Heart right ventricle (tissue), 16 donors: ENCODE measurements at regions of chr21 and their contacts with region 1.

Region 1: DNA sequence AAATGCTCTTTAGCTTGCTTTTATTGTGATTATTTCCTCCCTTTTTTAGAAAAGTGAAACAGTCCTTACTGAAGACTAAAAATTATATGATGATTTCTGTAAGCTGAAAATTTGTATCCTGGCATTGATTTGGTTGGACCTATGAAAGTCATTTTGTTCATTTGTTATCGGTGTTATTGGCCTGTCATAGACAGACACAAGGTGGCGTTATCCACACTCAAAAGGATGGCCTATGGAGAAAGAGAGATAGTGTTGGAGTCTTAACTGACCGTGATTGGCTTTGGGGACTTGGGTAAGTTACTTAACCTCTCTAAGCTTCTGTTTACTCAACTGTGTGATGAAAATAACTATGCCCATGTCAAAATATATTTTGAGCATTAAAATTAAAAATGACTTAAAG is 203.6 kb upstream of the CHODL start:
- DNase-seq: no peak
- ATAC-seq: peak in 2 of 8 donors; percentile 47 to 79
- H3K4me3 ChIP-seq: no peak overlapping the region
- H3K27ac ChIP-seq: no peak overlapping the region
- H3K4me1 ChIP-seq: no peaks in the 10 kb centered on the region
- H3K27me3 ChIP-seq: no peaks in the 10 kb centered on the region
- CTCF ChIP-seq: peak in 8 of 9 donors; percentile 21 to 64 (median 47)

Region 2: GRCh38 chr21:17911628-17912027 is 129.4 kb before region 1 on chr21:
- intact Hi-C with region 1: no loop called
- DNase-seq: no peak
- ATAC-seq: no peak
- H3K4me3 ChIP-seq: no peak overlapping the region
- H3K27ac ChIP-seq: no peak overlapping the region
- H3K4me1 ChIP-seq: no peaks in the 10 kb centered on the region
- H3K27me3 ChIP-seq: peaks cover 0 to 2% (median 0%) of the 10 kb centered on the region in 7 donors
- CTCF ChIP-seq: no peak

Region 3: GRCh38 chr21:17925000-17925610 is 115.9 kb before region 1 on chr21:
- intact Hi-C with region 1: loop called in 1 of 10 experiments (anchors 10 kb)
- DNase-seq: peak in 1 of 2 donors; percentile 63
- ATAC-seq: peak; percentile 63 to 93 (median 84)
- H3K4me3 ChIP-seq: no peak overlapping the region
- H3K27ac ChIP-seq: no peak overlapping the region
- H3K4me1 ChIP-seq: peaks cover 0 to 11% (median 0%) of the 10 kb centered on the region in 9 donors
- H3K27me3 ChIP-seq: no peaks in the 10 kb centered on the region
- CTCF ChIP-seq: peak; percentile 69 to 92 (median 87)

Region 4: DNA sequence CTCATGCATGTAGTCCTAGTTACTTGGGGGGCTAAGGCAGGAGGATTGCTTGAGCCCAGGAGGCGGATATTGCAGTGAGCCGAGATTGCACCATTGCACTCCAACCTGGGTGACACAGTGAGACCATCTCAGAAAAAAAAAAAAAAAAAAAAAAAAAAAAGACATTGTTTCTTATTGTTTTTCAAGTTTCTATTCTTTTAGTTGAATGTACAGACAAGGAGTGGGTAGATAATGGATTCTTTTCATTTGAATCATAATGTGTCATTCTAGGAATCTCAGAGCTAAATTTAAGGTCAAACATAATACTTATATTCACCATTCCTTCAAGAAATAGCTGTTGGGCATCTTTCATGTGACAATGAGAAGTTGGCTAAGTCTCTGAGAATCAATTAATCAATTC is 64.9 kb before region 1 on chr21:
- intact Hi-C with region 1: no loop called
- DNase-seq: no peak
- ATAC-seq: no peak
- H3K4me3 ChIP-seq: no peak overlapping the region
- H3K27ac ChIP-seq: no peak overlapping the region
- H3K4me1 ChIP-seq: peaks cover 0 to 20% (median 0%) of the 10 kb centered on the region in 9 donors
- H3K27me3 ChIP-seq: no peaks in the 10 kb centered on the region
- CTCF ChIP-seq: no peak

Region 5: DNA sequence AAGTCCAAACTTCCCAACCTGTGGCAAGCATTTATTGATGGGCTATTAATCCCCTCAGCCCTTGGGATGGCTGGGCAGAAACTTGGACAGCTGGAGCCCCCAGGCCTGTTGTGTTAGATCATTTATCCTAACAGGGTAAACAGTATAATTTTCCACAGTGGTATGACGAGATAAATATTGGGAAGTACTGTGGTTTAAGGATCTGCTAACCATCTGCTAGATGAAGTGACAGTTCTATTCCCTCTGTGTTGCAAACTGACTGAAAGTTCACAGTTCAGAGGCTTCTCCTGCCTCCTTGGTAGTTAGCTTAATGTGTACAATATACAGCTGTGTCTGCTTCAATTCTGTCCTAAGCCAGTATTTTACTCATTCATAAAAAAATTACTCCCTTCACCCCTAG is 76.2 kb after region 1 on chr21:
- intact Hi-C with region 1: no loop called
- DNase-seq: no peak
- ATAC-seq: no peak
- H3K4me3 ChIP-seq: no peak overlapping the region
- H3K27ac ChIP-seq: no peak overlapping the region
- H3K4me1 ChIP-seq: no peaks in the 10 kb centered on the region
- H3K27me3 ChIP-seq: no peaks in the 10 kb centered on the region
- CTCF ChIP-seq: no peak

Region 6: GRCh38 chr21:18204931-18205330 is 163.9 kb after region 1 on chr21:
- intact Hi-C with region 1: loop called in 1 of 10 experiments (anchors 5 kb)
- DNase-seq: no peak
- ATAC-seq: no peak
- H3K4me3 ChIP-seq: no peak overlapping the region
- H3K27ac ChIP-seq: no peak overlapping the region
- H3K4me1 ChIP-seq: no peaks in the 10 kb centered on the region
- H3K27me3 ChIP-seq: no peaks in the 10 kb centered on the region
- CTCF ChIP-seq: peak in 5 of 9 donors; percentile 12 to 49 (median 22)

Region 7: GRCh38 chr21:18265944-18266343 is 224.9 kb after region 1 on chr21:
- intact Hi-C with region 1: loop called in 1 of 10 experiments (anchors 10 kb)
- DNase-seq: no peak
- ATAC-seq: no peak
- H3K4me3 ChIP-seq: no peak overlapping the region
- H3K27ac ChIP-seq: no peak overlapping the region
- H3K4me1 ChIP-seq: no peaks in the 10 kb centered on the region
- H3K27me3 ChIP-seq: no peaks in the 10 kb centered on the region
- CTCF ChIP-seq: peak in 5 of 9 donors; percentile 6 to 30 (median 9)

Region 8: DNA sequence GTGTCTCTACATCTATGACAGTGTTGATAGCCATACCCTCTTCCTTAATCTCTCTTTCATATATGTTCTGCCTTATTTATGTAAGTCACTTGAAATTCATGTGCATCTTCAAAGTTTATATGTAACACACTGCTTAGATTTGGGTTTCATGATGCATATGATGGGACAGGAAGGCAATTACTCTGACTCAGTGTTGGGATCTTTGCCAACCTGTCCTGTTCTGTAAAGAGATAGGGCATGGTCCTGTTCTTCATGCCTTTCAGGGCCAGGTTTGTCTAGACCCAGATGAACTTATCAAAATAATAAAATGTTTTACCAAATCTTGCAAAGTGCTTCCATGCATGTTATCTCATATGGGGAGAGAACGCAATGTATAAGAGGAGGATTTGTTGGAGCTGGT is 293.1 kb after region 1 on chr21:
- intact Hi-C with region 1: no loop called
- DNase-seq: no peak
- ATAC-seq: no peak
- H3K4me3 ChIP-seq: no peak overlapping the region
- H3K27ac ChIP-seq: no peak overlapping the region
- H3K4me1 ChIP-seq: no peaks in the 10 kb centered on the region
- H3K27me3 ChIP-seq: no peaks in the 10 kb centered on the region
- CTCF ChIP-seq: no peak